Naive thymus-derived CD4-positive, alpha-beta T cell (primary cell): ENCODE measurements at regions of chr11 and their contacts with region 1.

Region 1: DNA sequence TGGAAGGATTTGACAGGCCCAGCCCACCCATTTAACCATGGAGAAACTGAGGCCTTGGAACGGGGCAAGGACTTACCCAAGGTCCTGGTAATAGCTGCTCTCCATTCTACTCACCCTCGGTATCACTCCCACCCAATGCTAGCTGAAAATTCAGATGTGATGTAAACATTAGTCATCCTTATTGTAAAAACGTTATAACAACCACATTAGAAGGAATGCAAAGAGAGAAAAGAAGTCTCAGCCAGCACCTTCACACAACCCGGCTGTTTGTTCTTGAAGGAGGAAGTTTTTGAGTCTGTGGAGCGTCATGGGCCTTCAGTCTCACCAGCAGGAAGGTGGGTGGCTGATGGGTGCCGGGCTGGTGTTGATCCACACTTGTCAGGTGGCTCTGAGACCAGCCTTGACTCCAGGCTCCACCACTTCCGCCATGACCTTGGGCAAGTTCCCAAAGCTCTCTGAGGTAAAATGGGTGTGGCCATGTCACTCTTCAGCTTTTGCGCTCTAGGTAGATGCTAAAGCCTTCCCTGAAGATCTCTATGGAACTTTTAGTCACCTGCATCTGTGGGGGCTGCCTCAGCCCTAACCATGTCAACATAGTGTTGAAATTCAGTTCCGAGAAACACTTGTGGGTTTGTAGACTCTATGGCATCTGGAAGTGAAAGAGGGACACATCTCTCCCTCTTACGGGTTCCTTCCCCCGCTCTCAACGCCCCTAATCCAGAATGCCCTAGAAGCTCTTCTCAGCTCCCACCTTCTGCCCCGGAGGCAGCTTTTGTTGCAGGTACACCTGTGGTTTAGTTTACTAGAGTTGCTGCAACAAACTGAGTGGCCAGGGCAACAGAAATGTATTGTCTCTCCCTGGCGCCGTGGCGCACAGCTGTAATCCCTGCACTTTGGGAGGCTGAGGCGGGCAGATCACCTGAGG is 14.8 kb downstream of the CD6 start:
- DNase-seq: peak; percentile 59 to 99 (median 97)
- ATAC-seq: peak; percentile 93
- H3K4me3 ChIP-seq: peak overlapping the region; percentile 42
- H3K4me3 Mint-ChIP-seq: peak overlapping the region; percentile 75 to 96 (median 88)
- H3K27ac ChIP-seq: peak overlapping the region; percentile 96
- H3K27ac Mint-ChIP-seq: peak overlapping the region; percentile 91 to 100 (median 99)
- H3K4me1 ChIP-seq: peaks cover 62 to 88% of the 10 kb centered on the region in 2 donors
- H3K4me1 Mint-ChIP-seq: peaks cover 49 to 99% (median 94%) of the 10 kb centered on the region in 7 donors
- H3K27me3 ChIP-seq: no peaks in the 10 kb centered on the region
- H3K27me3 Mint-ChIP-seq: no peaks in the 10 kb centered on the region

Region 2: DNA sequence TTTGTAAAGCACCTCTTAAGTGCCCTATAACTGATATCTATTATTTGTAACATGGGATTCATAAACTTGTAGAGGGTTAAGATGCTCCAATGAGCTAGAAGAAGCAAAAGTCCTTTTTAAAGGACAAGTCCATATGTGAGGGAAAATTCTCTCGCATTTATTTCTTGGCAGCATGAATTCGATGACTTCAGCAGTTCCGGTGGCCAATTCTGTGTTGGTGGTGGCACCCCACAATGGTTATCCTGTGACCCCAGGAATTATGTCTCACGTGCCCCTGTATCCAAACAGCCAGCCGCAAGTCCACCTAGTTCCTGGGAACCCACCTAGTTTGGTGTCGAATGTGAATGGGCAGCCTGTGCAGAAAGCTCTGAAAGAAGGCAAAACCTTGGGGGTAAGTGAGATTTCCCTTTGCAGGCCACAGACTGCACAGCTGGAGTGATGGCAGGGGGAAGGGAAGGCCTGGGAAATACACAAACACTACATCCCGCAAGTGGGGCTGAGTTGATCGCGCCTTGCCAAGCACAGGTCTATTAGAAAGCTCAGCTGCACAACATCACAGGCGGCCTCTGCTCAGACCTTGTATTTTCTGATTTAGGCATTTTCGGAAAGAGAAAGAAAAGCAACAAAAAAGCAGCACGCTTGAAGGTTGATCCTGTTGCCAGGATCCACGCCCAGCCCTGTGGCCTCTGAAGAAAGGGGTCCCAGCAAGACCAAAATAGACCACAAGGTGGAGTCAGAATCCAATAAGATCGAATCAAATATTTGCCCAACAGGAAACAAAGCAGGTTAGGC is 285.4 kb before region 1 on chr11:
- CTCF ChIA-PET with region 1: no interaction called
- POLR2A ChIA-PET with region 1: no interaction called
- intact Hi-C with region 1: no loop called
- DNase-seq: no peak
- ATAC-seq: no peak
- H3K4me3 ChIP-seq: no peak overlapping the region
- H3K4me3 Mint-ChIP-seq: no peak overlapping the region
- H3K27ac ChIP-seq: no peak overlapping the region
- H3K27ac Mint-ChIP-seq: no peak overlapping the region
- H3K4me1 ChIP-seq: no peaks in the 10 kb centered on the region
- H3K4me1 Mint-ChIP-seq: no peaks in the 10 kb centered on the region
- H3K27me3 ChIP-seq: no peaks in the 10 kb centered on the region
- H3K27me3 Mint-ChIP-seq: peaks cover 6 to 11% (median 9%) of the 10 kb centered on the region in 5 donors

Region 3: GRCh38 chr11:60906132-60906972 is 79.9 kb before region 1 on chr11 and contains the start of gene PRPF19:
- CTCF ChIA-PET with region 1: no interaction called
- POLR2A ChIA-PET with region 1: interaction called, 5 read pairs
- intact Hi-C with region 1: loop called (anchors 1 to 5 kb)
- DNase-seq: peak; percentile 98 to 100 (median 99)
- ATAC-seq: peak; percentile 96
- H3K4me3 ChIP-seq: peak within 1 kb of the TSS; percentile 89
- H3K4me3 Mint-ChIP-seq: peak within 1 kb of the TSS; percentile 84 to 95 (median 91)
- H3K27ac ChIP-seq: peak within 1 kb of the TSS; percentile 88
- H3K27ac Mint-ChIP-seq: peak within 1 kb of the TSS; percentile 95 to 100 (median 98)
- H3K4me1 ChIP-seq: peaks cover 22 to 26% of the 10 kb centered on the region in 2 donors
- H3K4me1 Mint-ChIP-seq: peaks cover 34 to 69% (median 58%) of the 10 kb centered on the region in 7 donors
- H3K27me3 ChIP-seq: no peaks in the 10 kb centered on the region
- H3K27me3 Mint-ChIP-seq: peaks cover 0 to 11% (median 0%) of the 10 kb centered on the region in 5 donors
- total RNA-seq, gene PRPF19: 72.8 to 139 (median 85.6) TPM

Region 4: GRCh38 chr11:60932605-60933356 is 53.5 kb before region 1 on chr11:
- CTCF ChIA-PET with region 1: no interaction called
- POLR2A ChIA-PET with region 1: no interaction called
- intact Hi-C with region 1: no loop called
- DNase-seq: no peak
- ATAC-seq: no peak
- H3K4me3 ChIP-seq: no peak overlapping the region
- H3K4me3 Mint-ChIP-seq: no peak overlapping the region
- H3K27ac ChIP-seq: no peak overlapping the region
- H3K27ac Mint-ChIP-seq: no peak overlapping the region
- H3K4me1 ChIP-seq: no peaks in the 10 kb centered on the region
- H3K4me1 Mint-ChIP-seq: peaks cover 0 to 1% (median 0%) of the 10 kb centered on the region in 7 donors
- H3K27me3 ChIP-seq: no peaks in the 10 kb centered on the region
- H3K27me3 Mint-ChIP-seq: peaks cover 0 to 16% (median 0%) of the 10 kb centered on the region in 5 donors

Region 5: DNA sequence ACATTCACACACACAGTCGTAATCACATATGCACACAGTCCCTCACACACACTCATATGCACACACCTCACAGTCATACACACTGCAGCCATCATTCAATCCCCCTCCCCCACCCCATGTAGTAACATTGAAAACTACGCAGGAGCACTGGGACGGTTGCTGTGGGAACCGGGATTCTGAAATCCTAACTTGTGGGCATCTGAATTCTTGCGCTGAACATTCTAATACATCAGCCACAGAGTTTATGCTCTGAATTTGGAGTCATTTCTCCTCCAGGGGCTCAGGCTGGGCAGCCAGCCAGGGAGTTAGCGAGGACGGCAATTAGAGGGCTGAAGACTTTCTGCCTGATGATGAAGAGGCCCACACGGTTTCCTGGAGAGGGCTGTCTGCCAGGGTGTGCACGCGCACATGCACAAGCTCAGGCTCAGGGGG is 17.9 kb after region 1 on chr11:
- CTCF ChIA-PET with region 1: interaction called, 12 read pairs
- POLR2A ChIA-PET with region 1: no interaction called
- intact Hi-C with region 1: loop called (anchors 1 kb)
- DNase-seq: peak in 5 of 9 donors; percentile 53 to 64 (median 54)
- ATAC-seq: peak; percentile 59
- H3K4me3 ChIP-seq: peak overlapping the region; percentile 14
- H3K4me3 Mint-ChIP-seq: peak overlapping the region; percentile 79 to 87 (median 82)
- H3K27ac ChIP-seq: peak overlapping the region; percentile 65
- H3K27ac Mint-ChIP-seq: peak overlapping the region; percentile 84 to 97 (median 95)
- H3K4me1 ChIP-seq: peaks cover 16 to 70% of the 10 kb centered on the region in 2 donors
- H3K4me1 Mint-ChIP-seq: peaks cover 59 to 90% (median 77%) of the 10 kb centered on the region in 7 donors
- H3K27me3 ChIP-seq: no peaks in the 10 kb centered on the region
- H3K27me3 Mint-ChIP-seq: no peaks in the 10 kb centered on the region

Region 6: GRCh38 chr11:61028272-61028761 is 42.1 kb after region 1 on chr11:
- CTCF ChIA-PET with region 1: interaction called, 3 read pairs
- POLR2A ChIA-PET with region 1: interaction called, 22 read pairs
- intact Hi-C with region 1: loop called in 1 of 2 experiments (anchors 1 kb)
- DNase-seq: peak in 3 of 9 donors; percentile 46 to 80 (median 60)
- ATAC-seq: peak; percentile 6
- H3K4me3 ChIP-seq: peak overlapping the region; percentile 30
- H3K4me3 Mint-ChIP-seq: peak overlapping the region; percentile 78 to 91 (median 86)
- H3K27ac ChIP-seq: peak overlapping the region; percentile 76
- H3K27ac Mint-ChIP-seq: peak overlapping the region; percentile 91 to 99 (median 97)
- H3K4me1 ChIP-seq: peaks cover 43 to 56% of the 10 kb centered on the region in 2 donors
- H3K4me1 Mint-ChIP-seq: peaks cover 62 to 97% (median 90%) of the 10 kb centered on the region in 7 donors
- H3K27me3 ChIP-seq: no peaks in the 10 kb centered on the region
- H3K27me3 Mint-ChIP-seq: no peaks in the 10 kb centered on the region

Region 7: DNA sequence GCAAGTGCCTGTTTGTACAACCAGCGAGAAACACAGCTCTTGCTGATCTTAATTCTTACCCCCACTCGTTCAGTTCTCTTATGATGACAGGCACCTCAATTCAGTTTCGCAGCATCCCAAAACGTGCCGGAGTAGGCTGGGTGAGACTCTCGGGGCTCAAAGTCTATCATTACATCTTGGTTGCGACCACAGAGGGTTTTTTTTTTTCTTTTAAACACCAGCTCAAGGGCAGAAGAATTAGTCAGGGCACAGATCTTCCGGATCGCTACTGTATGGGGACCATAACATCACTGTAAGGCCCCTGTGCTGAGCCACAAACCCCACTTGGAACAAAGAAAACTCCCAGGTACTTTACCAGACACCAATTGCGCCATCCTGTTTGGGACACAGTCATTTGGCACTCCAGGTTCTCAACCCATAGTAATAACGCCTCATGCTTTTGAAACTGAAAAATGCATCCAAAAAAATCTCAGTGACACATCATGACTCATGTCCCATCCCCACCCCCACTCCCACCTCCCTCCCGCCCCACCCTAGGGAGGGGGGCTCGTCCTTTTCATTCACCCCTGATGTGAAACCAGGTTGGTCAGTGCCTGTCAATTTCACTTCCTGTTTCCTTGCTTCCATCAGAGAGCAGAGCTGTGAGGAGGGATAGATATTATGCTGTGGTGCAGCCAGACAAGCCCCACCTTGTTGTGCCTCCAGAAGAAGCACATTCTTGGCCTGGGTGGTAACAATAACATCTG is 75.0 kb after region 1 on chr11:
- CTCF ChIA-PET with region 1: interaction called, 6 read pairs
- POLR2A ChIA-PET with region 1: interaction called, 4 read pairs
- intact Hi-C with region 1: loop called in 1 of 2 experiments (anchors 2 kb)
- DNase-seq: peak in 7 of 9 donors; percentile 47 to 89 (median 56)
- ATAC-seq: peak; percentile 86
- H3K4me3 ChIP-seq: peak overlapping the region; percentile 34
- H3K4me3 Mint-ChIP-seq: peak overlapping the region; percentile 75 to 94 (median 83)
- H3K27ac ChIP-seq: peak overlapping the region; percentile 72
- H3K27ac Mint-ChIP-seq: peak overlapping the region; percentile 88 to 99 (median 96)
- H3K4me1 ChIP-seq: peaks cover 24 to 48% of the 10 kb centered on the region in 2 donors
- H3K4me1 Mint-ChIP-seq: peaks cover 47 to 83% (median 80%) of the 10 kb centered on the region in 7 donors
- H3K27me3 ChIP-seq: no peaks in the 10 kb centered on the region
- H3K27me3 Mint-ChIP-seq: no peaks in the 10 kb centered on the region

Region 8: DNA sequence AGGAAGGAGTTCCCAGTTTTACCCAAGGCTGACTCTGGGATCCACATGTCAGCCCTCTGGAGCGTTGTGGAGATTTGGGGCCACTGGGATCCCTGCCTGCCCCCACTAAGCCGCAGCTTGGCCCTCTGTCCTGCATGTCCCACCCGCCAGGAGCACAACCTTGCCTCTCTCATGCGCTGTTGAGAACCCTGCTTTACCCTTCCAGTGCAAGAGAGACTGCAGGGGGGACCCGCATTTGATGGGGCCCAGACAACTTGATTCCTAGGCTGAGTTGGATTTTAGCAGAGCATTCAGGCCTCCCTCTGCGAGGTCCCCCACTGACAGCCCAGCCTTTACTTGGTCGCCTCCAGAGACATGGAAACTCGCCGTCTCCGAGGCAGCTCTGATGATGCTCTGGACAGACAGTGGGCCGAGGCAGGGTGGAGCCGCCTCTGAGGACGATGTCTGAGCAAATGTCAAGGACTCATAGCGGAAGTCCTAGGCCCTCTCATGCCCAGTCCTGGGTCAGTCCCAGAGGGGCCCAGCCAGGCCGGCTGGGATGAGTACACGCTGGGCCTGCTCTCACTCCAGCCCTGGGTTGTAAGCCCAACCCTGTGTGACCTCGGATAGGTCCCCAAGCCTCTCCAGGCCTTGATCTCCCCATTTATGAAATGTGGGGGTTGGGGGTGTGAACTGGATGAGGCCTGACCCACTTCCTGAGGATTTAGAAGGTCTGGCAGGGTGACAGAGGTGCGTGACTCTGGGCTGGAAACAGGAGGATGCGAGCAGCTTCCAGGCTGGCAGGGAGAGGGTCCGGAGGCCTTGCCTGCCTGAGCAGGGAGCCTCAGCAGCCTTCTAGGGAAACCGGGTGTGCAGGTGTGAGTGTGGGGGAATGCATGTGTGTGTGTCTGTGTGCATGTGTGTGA is 116.7 kb after region 1 on chr11:
- CTCF ChIA-PET with region 1: interaction called, 3 read pairs
- POLR2A ChIA-PET with region 1: interaction called, 16 read pairs
- intact Hi-C with region 1: loop called in 1 of 2 experiments (anchors 5 kb)
- DNase-seq: peak in 3 of 9 donors; percentile 39 to 47 (median 40)
- ATAC-seq: peak; percentile 28
- H3K4me3 ChIP-seq: peak overlapping the region; percentile 100
- H3K4me3 Mint-ChIP-seq: peak overlapping the region in 1 of 10 donors; percentile 97
- H3K27ac ChIP-seq: peak overlapping the region; percentile 98
- H3K27ac Mint-ChIP-seq: no peak overlapping the region
- H3K4me1 ChIP-seq: peaks cover 39 to 46% of the 10 kb centered on the region in 2 donors
- H3K4me1 Mint-ChIP-seq: peaks cover 17 to 48% (median 40%) of the 10 kb centered on the region in 7 donors
- H3K27me3 ChIP-seq: no peaks in the 10 kb centered on the region
- H3K27me3 Mint-ChIP-seq: no peaks in the 10 kb centered on the region

Region 9: DNA sequence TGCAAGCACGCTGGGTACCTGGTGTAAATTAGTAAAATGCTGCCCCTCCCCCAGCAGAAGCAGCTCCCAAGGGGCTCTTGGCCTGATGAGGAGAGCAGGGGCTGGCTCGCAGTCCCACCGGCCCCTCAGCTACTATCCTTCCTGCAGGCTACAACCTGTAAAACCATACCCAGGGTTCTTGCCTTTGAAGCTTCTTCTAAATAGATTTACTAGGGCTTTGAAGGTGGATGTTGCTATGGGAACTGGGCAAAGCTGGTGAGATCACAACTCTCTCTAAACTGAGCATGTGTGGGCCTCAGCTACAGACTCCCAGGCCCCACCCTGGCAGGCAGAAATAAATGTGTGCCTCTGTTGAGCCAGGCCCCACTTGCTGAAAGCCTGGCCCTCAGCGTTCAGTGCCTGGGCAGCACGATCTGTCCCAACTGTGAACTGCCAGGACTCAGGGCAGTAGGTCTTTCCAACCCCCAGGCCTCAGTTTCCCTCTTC is 134.5 kb after region 1 on chr11:
- CTCF ChIA-PET with region 1: interaction called, 3 read pairs
- POLR2A ChIA-PET with region 1: interaction called, 5 read pairs
- intact Hi-C with region 1: loop called in 1 of 2 experiments (anchors 1 kb)
- DNase-seq: peak in 7 of 9 donors; percentile 81 to 92 (median 88)
- ATAC-seq: peak; percentile 93
- H3K4me3 ChIP-seq: peak overlapping the region; percentile 21
- H3K4me3 Mint-ChIP-seq: peak overlapping the region in 9 of 10 donors; percentile 73 to 85 (median 82)
- H3K27ac ChIP-seq: peak overlapping the region; percentile 79
- H3K27ac Mint-ChIP-seq: peak overlapping the region; percentile 77 to 100 (median 99)
- H3K4me1 ChIP-seq: peaks cover 15 to 45% of the 10 kb centered on the region in 2 donors
- H3K4me1 Mint-ChIP-seq: peaks cover 40 to 77% (median 64%) of the 10 kb centered on the region in 7 donors
- H3K27me3 ChIP-seq: no peaks in the 10 kb centered on the region
- H3K27me3 Mint-ChIP-seq: no peaks in the 10 kb centered on the region